Heart left ventricle (tissue), 16 donors: ENCODE measurements at regions of chr5 and their contacts with region 1.

Region 1: DNA sequence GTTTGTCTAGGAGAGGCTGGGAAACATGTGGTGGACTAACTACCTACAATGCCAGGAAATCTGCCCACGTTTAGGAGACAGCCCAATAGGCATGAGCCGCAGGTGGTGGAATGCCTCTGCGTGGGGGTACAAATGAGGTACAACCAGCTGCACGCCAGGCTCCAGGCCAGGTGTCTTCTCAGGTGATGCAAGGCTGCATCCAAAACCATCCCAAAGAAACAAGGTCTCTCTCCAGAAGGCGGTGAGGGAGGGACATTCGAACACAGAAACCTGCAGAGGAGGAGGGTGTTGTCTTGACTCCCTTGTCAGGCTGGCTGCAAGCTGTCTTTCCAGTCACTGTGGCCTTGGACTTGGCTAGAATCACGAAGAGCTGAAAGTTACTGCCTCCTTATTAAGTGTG is 11.6 kb downstream of the ANKH start:
- DNase-seq: no peak
- ATAC-seq: peak in 2 of 4 donors; percentile 26 to 31
- H3K4me3 ChIP-seq: no peak overlapping the region
- H3K27ac ChIP-seq: peak overlapping the region in 7 of 12 donors; percentile 3 to 77 (median 54)
- H3K4me1 ChIP-seq: peaks cover 0 to 75% (median 42%) of the 10 kb centered on the region in 12 donors
- H3K27me3 ChIP-seq: no peaks in the 10 kb centered on the region
- CTCF ChIP-seq: no peak
- POLR2A ChIP-seq: no peak

Region 2: DNA sequence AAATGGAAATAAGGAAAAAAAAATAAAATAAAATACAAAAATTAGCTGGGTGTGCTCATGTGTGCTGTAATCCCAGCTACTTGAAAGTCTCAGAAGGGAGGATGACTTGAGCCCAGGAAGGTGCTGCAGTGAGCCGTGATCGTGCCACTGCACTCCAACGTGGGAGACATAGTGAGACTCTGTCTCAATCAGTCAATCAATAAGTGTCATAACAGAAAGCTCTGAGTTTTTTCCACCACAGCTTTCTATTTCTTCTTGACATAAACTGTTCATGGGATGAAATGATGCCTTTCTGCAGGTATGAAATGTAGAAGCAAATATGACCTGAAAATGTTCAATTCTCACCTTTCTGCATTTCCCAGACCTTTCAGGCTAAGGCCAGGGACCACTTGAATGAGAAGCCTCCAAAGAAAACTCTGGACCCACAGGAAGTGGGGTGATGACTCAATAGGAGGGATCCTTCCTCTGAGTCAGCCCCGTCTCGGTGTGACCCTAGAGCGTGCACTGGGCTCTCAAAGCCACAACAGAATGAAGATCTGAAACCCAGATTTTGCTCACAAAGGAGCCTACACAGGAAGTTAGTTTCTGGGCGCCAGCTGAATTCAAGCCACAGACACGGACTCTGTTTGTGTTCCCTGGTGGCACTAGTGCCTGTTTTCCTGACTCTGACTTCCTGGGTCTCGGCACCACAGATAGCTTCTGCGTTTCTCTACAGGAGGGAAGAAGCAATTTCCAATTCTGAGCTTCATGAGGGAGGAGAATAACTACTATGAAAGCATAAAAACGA is 50.4 kb before region 1 on chr5:
- intact Hi-C with region 1: loop called in 1 of 10 experiments (anchors 5 kb)
- DNase-seq: peak in 4 of 5 donors; percentile 57 to 78 (median 68)
- ATAC-seq: peak; percentile 25 to 80 (median 74)
- H3K4me3 ChIP-seq: peak overlapping the region in 3 of 12 donors; percentile 6 to 27 (median 12)
- H3K27ac ChIP-seq: peak overlapping the region in 11 of 12 donors; percentile 31 to 85 (median 60)
- H3K4me1 ChIP-seq: peaks cover 15 to 63% (median 42%) of the 10 kb centered on the region in 12 donors
- H3K27me3 ChIP-seq: no peaks in the 10 kb centered on the region
- CTCF ChIP-seq: no peak
- POLR2A ChIP-seq: no peak

Region 3: GRCh38 chr5:15013654-15014463 is 153.9 kb after region 1 on chr5:
- intact Hi-C with region 1: no loop called
- DNase-seq: no peak
- ATAC-seq: peak; percentile 72 to 83 (median 80)
- H3K4me3 ChIP-seq: no peak overlapping the region
- H3K27ac ChIP-seq: no peak overlapping the region
- H3K4me1 ChIP-seq: peaks cover 0 to 18% (median 12%) of the 10 kb centered on the region in 12 donors
- H3K27me3 ChIP-seq: no peaks in the 10 kb centered on the region
- CTCF ChIP-seq: peak; percentile 52 to 81 (median 70)
- POLR2A ChIP-seq: no peak